Right cardiac atrium (tissue), 5 donors: ENCODE measurements at regions of chr18 and their contacts with region 1.

Region 1: DNA sequence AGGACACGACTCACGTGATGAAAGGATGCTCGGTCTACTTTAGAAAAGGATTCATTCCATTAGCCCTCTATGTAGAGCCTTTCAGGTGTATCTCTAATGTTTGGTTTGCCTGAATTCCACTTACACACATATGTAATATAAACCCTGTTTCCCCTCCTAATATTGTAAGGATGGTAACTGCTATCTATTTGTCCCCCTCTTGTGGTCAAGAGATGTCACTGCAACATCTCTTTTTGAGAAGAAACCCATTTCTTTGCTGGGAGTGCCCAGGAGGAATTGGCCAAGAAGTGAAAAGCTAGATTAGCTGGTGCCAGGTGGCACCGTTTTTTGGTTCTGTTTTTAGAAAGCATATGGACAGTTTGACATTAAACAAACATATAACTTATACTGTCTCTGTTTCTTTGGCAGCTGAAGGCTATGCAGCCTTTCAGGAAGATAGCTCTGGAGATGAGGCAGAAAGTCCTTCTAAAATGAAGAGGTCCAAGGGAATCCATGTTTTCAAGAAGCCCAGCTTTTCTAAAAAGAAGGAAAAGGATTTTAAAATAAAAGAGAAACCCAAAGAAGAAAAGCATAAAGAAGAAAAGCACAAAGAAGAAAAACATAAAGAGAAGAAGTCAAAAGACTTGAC is 41.2 kb downstream of the RALBP1 start:
- DNase-seq: no peak
- ATAC-seq: peak; percentile 47 to 56
- H3K4me3 ChIP-seq: no peak overlapping the region
- H3K27ac ChIP-seq: no peak overlapping the region
- H3K4me1 ChIP-seq: no peaks in the 10 kb centered on the region
- H3K27me3 ChIP-seq: no peaks in the 10 kb centered on the region

Region 2: GRCh38 chr18:9079818-9080528 is 436.6 kb before region 1 on chr18:
- intact Hi-C with region 1: loop called in 1 of 4 experiments (anchors 10 kb)
- DNase-seq: no peak
- ATAC-seq: no peak
- H3K4me3 ChIP-seq: no peak overlapping the region
- H3K27ac ChIP-seq: no peak overlapping the region
- H3K4me1 ChIP-seq: no peaks in the 10 kb centered on the region
- H3K27me3 ChIP-seq: no peaks in the 10 kb centered on the region